ENCODE measurements at regions of chr10 and their contacts with region 1.

Region 1: DNA sequence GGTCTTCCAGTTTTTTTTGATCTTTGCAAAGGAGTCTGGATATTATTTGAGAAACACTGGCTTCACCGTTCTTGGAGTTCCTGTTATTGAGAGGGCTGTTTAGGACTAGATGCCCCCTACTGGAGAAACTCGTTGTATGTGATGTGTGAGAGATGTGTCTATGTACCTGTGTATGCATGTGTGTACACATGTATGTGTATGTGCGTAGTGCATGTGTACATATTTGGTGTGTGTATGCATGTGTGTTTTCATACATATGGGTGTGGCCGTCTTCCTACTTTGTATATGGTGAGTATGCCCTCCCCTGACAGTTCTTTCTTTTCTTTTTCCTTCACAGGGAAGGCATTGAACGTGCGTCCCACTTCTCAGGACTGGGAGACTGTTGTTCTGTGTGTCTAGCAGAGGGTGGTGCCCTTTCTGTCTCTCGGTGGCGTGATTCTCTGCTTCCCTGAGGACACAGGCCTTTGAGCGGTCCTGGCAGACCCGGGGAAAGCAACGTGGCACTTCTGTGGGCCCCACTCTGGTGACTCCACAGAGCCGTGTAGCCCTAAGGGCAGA is 3.0 kb upstream of the CALHM3 start:
- DNase-seq: peak in 3 of 9 experiments; percentile 51 to 86 (median 80)
- ATAC-seq: peak; percentile 78
- H3K4me3 ChIP-seq: no peak overlapping the region
- H3K4me3 Mint-ChIP-seq: no peak overlapping the region
- H3K27ac ChIP-seq: no peak overlapping the region
- H3K27ac Mint-ChIP-seq: no peak overlapping the region
- H3K4me1 ChIP-seq: no peaks in the 10 kb centered on the region
- H3K4me1 Mint-ChIP-seq: peaks cover 6% of the 10 kb centered on the region
- H3K27me3 ChIP-seq: no peaks in the 10 kb centered on the region
- H3K27me3 Mint-ChIP-seq: peaks cover 3% of the 10 kb centered on the region
- CTCF ChIP-seq: peak; percentile 77

Region 2: DNA sequence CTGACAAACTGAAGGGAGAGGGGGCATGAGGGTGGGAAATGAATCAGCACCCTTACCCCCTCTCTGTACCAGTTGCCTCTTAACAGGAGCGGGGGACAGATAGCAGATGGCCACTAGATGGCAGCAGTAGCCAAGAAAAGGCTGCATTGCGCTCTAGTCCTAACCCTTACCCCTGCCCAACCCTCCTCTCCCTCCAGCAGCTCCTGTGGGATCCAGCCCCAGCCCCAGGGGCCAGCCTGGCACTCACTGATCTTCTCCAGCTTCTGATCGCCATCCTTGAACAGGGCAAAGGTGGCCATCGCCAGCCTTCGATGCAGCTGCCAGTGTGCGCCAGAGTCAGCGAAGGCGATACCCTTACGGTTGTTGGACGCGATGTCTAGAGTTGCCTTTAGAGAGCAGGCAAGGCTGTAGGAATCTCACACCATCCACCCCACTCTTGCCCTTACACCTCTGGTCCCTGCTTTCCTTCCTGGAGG is 647.0 kb before region 1 on chr10:
- CTCF ChIA-PET with region 1: no interaction called
- POLR2A ChIA-PET with region 1: no interaction called
- intact Hi-C with region 1: loop called (anchors 2 to 10 kb)
- DNase-seq: peak; percentile 46 to 83 (median 77)
- ATAC-seq: peak; percentile 98
- H3K4me3 ChIP-seq: no peak overlapping the region
- H3K4me3 Mint-ChIP-seq: no peak overlapping the region
- H3K27ac ChIP-seq: no peak overlapping the region
- H3K27ac Mint-ChIP-seq: no peak overlapping the region
- H3K4me1 ChIP-seq: no peaks in the 10 kb centered on the region
- H3K4me1 Mint-ChIP-seq: no peaks in the 10 kb centered on the region
- H3K27me3 ChIP-seq: peaks cover 0 to 3% of the 10 kb centered on the region in 2 experiments
- H3K27me3 Mint-ChIP-seq: peaks cover 2% of the 10 kb centered on the region
- CTCF ChIP-seq: peak; percentile 80

Region 3: DNA sequence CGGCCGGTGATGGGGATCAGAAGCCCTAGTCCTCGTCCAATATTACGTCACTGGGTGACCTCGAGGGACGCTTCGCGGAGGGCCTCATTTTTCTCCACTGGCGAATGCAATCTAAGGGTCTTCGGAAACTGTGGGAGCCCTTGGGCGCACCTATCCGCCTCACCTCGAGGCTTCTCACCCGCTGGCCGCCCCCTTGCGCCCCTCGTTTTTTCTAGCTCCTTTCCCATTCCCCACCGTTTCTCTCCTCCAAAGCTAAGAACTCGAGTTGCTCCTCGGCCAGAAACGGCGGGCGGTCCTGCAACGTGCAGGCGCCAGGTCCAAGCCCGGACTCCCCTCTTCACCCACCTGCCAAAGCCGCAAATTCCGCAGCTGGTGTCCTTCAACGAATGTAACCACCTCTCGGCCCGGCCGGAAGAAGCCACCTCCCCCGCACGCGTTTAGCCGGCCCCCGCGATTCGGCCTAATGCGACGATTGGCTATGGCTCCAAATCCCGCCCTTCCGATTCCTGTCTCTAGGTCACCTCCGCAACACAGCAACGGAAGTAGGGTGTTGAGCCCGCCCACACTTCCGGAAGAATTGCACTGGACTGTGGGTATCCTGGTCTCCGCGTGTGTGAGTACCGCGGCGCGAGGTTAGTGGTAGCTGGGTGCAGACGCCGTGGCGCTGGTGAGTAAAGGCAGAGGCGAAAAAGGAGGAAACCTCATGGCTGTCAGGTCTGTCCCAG is 85.8 kb before region 1 on chr10 and contains the starts of genes ATP5MK and PDCD11:
- CTCF ChIA-PET with region 1: interaction called, 11 read pairs
- POLR2A ChIA-PET with region 1: no interaction called
- intact Hi-C with region 1: no loop called
- DNase-seq: peak; percentile 86 to 97 (median 94)
- ATAC-seq: peak; percentile 97
- H3K4me3 ChIP-seq: peak within 1 kb of the TSS; percentile 88 to 99
- H3K4me3 Mint-ChIP-seq: peak within 1 kb of the TSS; percentile 97
- H3K27ac ChIP-seq: peak within 1 kb of the TSS; percentile 66 to 69
- H3K27ac Mint-ChIP-seq: peak within 1 kb of the TSS; percentile 96
- H3K4me1 ChIP-seq: peaks cover 39% of the 10 kb centered on the region
- H3K4me1 Mint-ChIP-seq: peaks cover 64% of the 10 kb centered on the region
- H3K27me3 ChIP-seq: no peaks in the 10 kb centered on the region
- H3K27me3 Mint-ChIP-seq: no peaks in the 10 kb centered on the region
- CTCF ChIP-seq: no peak
- total RNA-seq, gene ATP5MK: 93.4 to 97.3 TPM
- total RNA-seq, gene PDCD11: 13.7 to 15.0 TPM

Region 4: GRCh38 chr10:103427866-103428265 is 54.2 kb before region 1 on chr10:
- CTCF ChIA-PET with region 1: interaction called, 11 read pairs
- POLR2A ChIA-PET with region 1: no interaction called
- intact Hi-C with region 1: no loop called
- DNase-seq: no peak
- ATAC-seq: no peak
- H3K4me3 ChIP-seq: no peak overlapping the region
- H3K4me3 Mint-ChIP-seq: no peak overlapping the region
- H3K27ac ChIP-seq: no peak overlapping the region
- H3K27ac Mint-ChIP-seq: no peak overlapping the region
- H3K4me1 ChIP-seq: peaks cover 22% of the 10 kb centered on the region
- H3K4me1 Mint-ChIP-seq: peaks cover 28% of the 10 kb centered on the region
- H3K27me3 ChIP-seq: no peaks in the 10 kb centered on the region
- H3K27me3 Mint-ChIP-seq: no peaks in the 10 kb centered on the region
- CTCF ChIP-seq: no peak

Region 5: GRCh38 chr10:103470761-103471653 is 11.0 kb before region 1 on chr10:
- CTCF ChIA-PET with region 1: interaction called, 15 read pairs
- POLR2A ChIA-PET with region 1: no interaction called
- intact Hi-C with region 1: loop called in 1 of 2 experiments (anchors 1 kb)
- DNase-seq: peak; percentile 36 to 90 (median 79)
- ATAC-seq: peak; percentile 91
- H3K4me3 ChIP-seq: peak overlapping the region; percentile 19 to 27
- H3K4me3 Mint-ChIP-seq: peak overlapping the region; percentile 71
- H3K27ac ChIP-seq: peak overlapping the region; percentile 26 to 87
- H3K27ac Mint-ChIP-seq: peak overlapping the region; percentile 91
- H3K4me1 ChIP-seq: peaks cover 28% of the 10 kb centered on the region
- H3K4me1 Mint-ChIP-seq: peaks cover 38% of the 10 kb centered on the region
- H3K27me3 ChIP-seq: no peaks in the 10 kb centered on the region
- H3K27me3 Mint-ChIP-seq: no peaks in the 10 kb centered on the region
- CTCF ChIP-seq: no peak

Region 6: GRCh38 chr10:103592186-103593021 is 110.4 kb after region 1 on chr10:
- CTCF ChIA-PET with region 1: no interaction called
- POLR2A ChIA-PET with region 1: no interaction called
- intact Hi-C with region 1: loop called in 1 of 2 experiments (anchors 5 kb)
- DNase-seq: peak in 7 of 9 experiments; percentile 24 to 56 (median 37)
- ATAC-seq: peak; percentile 85
- H3K4me3 ChIP-seq: no peak overlapping the region
- H3K4me3 Mint-ChIP-seq: no peak overlapping the region
- H3K27ac ChIP-seq: no peak overlapping the region
- H3K27ac Mint-ChIP-seq: no peak overlapping the region
- H3K4me1 ChIP-seq: no peaks in the 10 kb centered on the region
- H3K4me1 Mint-ChIP-seq: no peaks in the 10 kb centered on the region
- H3K27me3 ChIP-seq: no peaks in the 10 kb centered on the region
- H3K27me3 Mint-ChIP-seq: no peaks in the 10 kb centered on the region
- CTCF ChIP-seq: peak; percentile 40